Panc1 (cell line): ENCODE measurements at regions of chr10 and their contacts with region 1.

Region 1: GRCh38 chr10:112183329-112184051 is at the start of gene GPAM:
- DNase-seq: peak; percentile 39
- ATAC-seq: peak; percentile 100
- H3K4me3 ChIP-seq: peak within 1 kb of the TSS; percentile 92 to 96
- H3K27ac ChIP-seq: peak within 1 kb of the TSS; percentile 79
- H3K4me1 ChIP-seq: peaks cover 13% of the 10 kb centered on the region
- H3K27me3 ChIP-seq: no peaks in the 10 kb centered on the region
- CTCF ChIP-seq: no peak
- total RNA-seq, gene GPAM: 8.0 TPM

Region 2: GRCh38 chr10:112195224-112195623 is 11.7 kb after region 1 on chr10:
- CTCF ChIA-PET with region 1: no interaction called
- POLR2A ChIA-PET with region 1: no interaction called
- in situ Hi-C with region 1: no loop called
- intact Hi-C with region 1: no loop called
- DNase-seq: no peak
- ATAC-seq: no peak
- H3K4me3 ChIP-seq: no peak overlapping the region
- H3K27ac ChIP-seq: no peak overlapping the region
- H3K4me1 ChIP-seq: no peaks in the 10 kb centered on the region
- H3K27me3 ChIP-seq: no peaks in the 10 kb centered on the region; the same call in none of the 2 replicates
- CTCF ChIP-seq: no peak

Region 3: DNA sequence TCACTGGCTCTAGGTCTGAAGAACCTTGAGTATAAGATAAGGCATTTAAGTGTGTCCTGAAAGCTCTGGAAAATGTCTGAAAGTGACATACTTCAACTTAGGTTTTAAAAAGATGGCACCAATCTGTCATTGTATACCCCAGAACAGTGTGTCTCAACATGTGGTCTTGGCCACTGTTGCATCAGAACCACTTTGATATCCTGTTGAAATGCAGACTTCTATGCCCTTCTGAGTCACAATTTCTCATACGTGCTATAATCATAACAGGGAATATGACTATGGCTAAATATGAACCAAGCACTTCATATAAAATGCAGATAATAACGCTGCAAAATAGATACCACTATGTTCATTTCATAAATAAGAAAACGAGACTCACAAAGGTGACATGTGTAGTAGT is 38.1 kb after region 1 on chr10:
- CTCF ChIA-PET with region 1: no interaction called
- POLR2A ChIA-PET with region 1: no interaction called
- in situ Hi-C with region 1: no loop called
- intact Hi-C with region 1: no loop called
- DNase-seq: no peak
- ATAC-seq: no peak
- H3K4me3 ChIP-seq: no peak overlapping the region
- H3K27ac ChIP-seq: no peak overlapping the region
- H3K4me1 ChIP-seq: no peaks in the 10 kb centered on the region
- H3K27me3 ChIP-seq: peaks cover 5% of the 10 kb centered on the region; the same call in 1 of the 2 replicates
- CTCF ChIP-seq: no peak

Region 4: DNA sequence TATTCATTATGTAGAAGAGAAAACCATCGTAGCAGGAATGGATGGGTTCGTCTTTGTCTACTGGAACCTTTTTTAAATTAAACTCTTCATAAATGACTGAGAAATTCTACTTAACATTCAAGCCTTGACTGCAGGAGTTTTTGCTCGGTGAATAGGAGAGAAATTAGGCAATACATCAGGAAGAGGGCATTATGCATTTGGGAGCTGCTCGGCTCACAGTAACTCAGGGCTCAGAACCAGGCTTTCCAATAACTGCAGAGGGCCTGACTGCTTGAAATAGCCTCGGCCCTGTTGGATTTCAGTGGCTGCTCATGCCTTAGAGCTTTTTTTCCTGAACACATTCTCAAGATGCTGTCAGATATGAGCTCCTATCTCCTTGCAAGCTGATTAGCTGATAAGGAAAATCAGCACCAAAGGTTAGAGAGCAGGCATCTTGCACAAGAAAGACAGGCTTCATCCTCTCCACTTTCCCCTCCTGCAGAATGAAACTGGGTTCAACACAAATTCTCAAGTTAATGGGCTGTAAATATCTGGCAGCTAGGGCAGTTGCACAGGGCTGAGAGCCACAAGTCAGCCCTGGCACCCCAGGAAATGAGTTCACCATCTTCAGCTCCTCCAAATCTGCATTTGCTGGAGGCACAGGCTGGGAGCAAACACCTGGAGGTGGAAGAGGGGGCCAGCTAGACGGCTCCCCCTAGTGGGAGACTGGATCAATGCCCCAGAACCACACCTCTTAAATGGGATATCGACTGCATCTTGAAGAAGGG is 124.1 kb after region 1 on chr10:
- CTCF ChIA-PET with region 1: no interaction called
- POLR2A ChIA-PET with region 1: no interaction called
- in situ Hi-C with region 1: no loop called
- intact Hi-C with region 1: loop called (anchors 10 kb)
- DNase-seq: no peak
- ATAC-seq: peak; percentile 91
- H3K4me3 ChIP-seq: no peak overlapping the region
- H3K27ac ChIP-seq: no peak overlapping the region
- H3K4me1 ChIP-seq: no peaks in the 10 kb centered on the region
- H3K27me3 ChIP-seq: peaks cover 22% of the 10 kb centered on the region
- CTCF ChIP-seq: peak; percentile 95

Region 5: DNA sequence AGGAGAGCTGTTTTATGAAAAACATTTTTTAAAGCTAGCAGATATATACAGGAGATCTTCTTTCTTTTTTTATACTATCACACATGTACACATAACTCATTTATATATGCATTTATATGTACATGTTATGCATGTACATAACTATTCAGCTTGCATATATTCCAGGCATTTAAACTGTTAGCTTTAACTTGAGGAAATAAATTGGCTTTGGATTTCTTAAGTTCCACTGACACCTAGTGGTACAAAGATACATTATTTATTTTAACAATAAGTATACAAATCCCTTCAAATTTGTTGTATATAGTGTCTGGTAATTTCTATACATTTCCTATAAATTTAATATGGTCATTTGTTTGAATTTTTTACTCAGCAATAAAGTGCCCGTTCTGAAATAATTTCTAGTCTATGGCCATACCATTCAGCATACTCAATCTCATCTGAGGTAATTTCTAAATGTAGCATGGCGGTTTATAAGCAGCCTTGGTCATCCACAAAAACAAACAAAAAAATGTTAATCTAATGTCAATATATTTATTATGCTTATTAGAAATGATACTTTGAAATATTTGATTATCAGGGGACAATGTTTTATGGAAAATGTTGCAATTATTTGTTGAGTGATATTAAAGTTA is 251.6 kb after region 1 on chr10:
- CTCF ChIA-PET with region 1: no interaction called
- POLR2A ChIA-PET with region 1: no interaction called
- in situ Hi-C with region 1: no loop called
- intact Hi-C with region 1: loop called (anchors 10 kb)
- DNase-seq: no peak
- ATAC-seq: no peak
- H3K4me3 ChIP-seq: no peak overlapping the region
- H3K27ac ChIP-seq: no peak overlapping the region
- H3K4me1 ChIP-seq: no peaks in the 10 kb centered on the region
- H3K27me3 ChIP-seq: no peaks in the 10 kb centered on the region
- CTCF ChIP-seq: peak; percentile 44; the same call in 1 of the 2 replicates

Region 6: DNA sequence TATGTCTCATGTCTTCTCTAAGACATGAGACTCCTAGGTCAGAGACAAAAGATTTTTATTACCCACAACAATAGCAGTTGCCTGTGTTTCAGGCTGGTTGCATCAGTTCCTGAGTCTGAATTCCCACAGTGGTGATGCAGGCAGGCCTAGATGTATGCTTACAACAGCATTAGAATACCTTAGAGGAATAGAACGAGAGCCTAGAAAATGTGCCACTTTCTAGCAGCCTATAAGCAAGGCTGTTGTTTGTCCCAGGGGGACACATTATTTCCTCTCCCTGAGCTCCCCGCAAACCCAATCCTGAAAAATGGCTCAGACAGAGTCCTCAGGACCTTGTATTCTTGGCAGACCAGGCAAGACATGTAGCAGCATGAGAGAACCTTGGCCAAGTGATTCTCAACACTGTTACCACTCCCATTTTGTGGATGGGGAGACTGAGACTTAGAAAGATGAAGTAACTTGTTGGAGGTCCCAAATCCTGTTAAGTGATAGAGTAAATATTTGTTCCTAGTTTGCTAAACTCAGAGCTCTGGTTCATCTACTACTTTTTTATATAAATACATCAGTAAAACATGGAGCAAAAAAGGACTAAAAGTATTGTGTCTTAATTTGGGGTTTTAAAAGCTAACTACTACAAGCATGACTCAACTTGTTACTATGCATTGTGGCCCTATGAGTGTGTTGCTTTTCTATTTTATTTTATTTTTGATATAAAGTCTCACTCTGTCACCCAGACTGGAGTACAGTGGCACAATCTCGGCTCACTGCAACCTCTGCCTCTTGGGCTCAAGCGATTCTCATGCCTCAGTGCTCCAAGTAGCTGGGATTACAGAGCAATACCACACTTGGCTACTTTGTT is 277.8 kb after region 1 on chr10:
- CTCF ChIA-PET with region 1: no interaction called
- POLR2A ChIA-PET with region 1: no interaction called
- in situ Hi-C with region 1: no loop called
- intact Hi-C with region 1: no loop called
- DNase-seq: peak; percentile 86
- ATAC-seq: no peak
- H3K4me3 ChIP-seq: no peak overlapping the region
- H3K27ac ChIP-seq: peak overlapping the region; percentile 70; the same call in 1 of the 2 replicates
- H3K4me1 ChIP-seq: no peaks in the 10 kb centered on the region
- H3K27me3 ChIP-seq: no peaks in the 10 kb centered on the region
- CTCF ChIP-seq: no peak